Activated B cell treated with CpG ODN at 0.5 μM for 24 hours (primary cell): ENCODE measurements at regions of chr15 and their contacts with region 1.

Region 1: DNA sequence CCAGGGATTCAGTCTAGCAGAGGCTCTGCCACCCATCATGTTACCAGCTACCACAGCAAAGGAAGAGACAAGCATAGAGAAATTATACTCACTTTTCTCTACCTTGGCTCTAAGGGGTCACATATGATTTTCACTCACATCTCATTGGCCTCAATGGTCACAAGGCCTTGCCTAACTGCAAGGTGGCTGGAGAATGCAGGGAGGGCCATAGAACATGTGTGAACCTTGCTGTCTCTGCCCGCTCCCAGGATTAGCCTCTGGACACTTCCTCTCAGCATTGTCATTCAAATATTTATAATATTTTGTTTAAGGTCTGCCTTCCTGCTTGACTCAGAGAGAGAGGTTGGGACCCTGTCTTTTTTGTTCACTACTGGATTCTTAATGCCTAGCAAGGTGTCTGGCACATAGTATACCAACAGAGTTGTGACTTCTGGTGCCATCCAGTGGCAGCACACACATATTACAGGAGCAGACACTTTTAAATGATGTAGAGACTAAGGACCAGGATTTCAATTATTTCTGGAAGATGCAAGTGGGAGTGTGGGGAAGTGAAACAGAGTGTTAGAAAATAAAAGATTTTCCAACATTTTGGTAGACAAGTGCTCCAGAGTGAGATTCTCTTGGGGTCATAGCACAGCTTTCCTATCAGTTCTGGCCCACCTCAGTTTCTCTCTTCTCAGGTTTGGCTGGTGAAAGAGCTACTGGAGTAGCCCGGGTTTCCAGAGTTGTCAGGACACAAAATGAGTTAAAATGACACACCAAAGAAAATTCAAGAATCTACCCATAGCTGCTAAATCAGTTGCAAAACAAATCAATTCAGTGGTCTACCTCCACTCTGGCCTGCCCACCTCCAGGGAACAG is 119.0 kb upstream of the RASGRP1 start:
- DNase-seq: peak; percentile 47
- ATAC-seq: peak; percentile 74
- H3K4me3 Mint-ChIP-seq: peak overlapping the region; percentile 32
- H3K27ac Mint-ChIP-seq: peak overlapping the region; percentile 86
- H3K4me1 Mint-ChIP-seq: peaks cover 33% of the 10 kb centered on the region
- H3K27me3 Mint-ChIP-seq: no peaks in the 10 kb centered on the region
- CTCF ChIP-seq: peak; percentile 56

Region 2: GRCh38 chr15:38440353-38441129 is 243.1 kb before region 1 on chr15:
- CTCF ChIA-PET with region 1: interaction called, 106 read pairs
- POLR2A ChIA-PET with region 1: interaction called, 6 read pairs
- intact Hi-C with region 1: loop called (anchors 1 kb)
- DNase-seq: no peak
- ATAC-seq: peak; percentile 96
- H3K4me3 Mint-ChIP-seq: no peak overlapping the region
- H3K27ac Mint-ChIP-seq: no peak overlapping the region
- H3K4me1 Mint-ChIP-seq: peaks cover 5% of the 10 kb centered on the region
- H3K27me3 Mint-ChIP-seq: peaks cover 34% of the 10 kb centered on the region
- CTCF ChIP-seq: peak; percentile 64

Region 3: DNA sequence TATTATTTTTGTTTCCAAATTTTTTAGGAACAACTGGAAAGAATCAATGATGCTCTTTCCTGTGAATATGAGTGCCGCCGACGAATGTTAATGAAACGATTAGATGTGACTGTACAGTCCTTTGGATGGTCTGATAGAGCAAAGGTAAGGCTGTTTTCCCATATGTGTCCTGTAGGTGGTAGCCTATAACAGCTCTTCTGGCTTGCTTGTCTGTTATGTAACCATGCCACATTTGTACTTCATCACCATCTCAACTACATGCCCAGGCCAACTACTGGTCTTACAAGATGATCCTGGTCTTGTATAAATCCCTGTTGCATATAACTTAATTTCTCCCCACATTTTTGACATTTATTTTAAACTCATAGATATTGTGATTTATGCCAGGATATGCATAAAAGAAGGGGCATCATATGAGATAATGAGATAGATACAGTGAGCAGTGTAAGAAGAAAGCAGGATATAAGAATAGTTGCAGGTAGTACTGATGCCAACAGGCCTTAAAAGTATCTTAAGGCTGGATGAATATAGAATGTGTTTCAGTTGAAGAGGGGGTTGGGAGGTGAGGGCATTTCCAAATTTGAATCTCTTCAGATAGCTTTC is 209.4 kb before region 1 on chr15:
- CTCF ChIA-PET with region 1: interaction called, 84 read pairs
- POLR2A ChIA-PET with region 1: interaction called, 3 read pairs
- intact Hi-C with region 1: loop called (anchors 1 kb)
- DNase-seq: no peak
- ATAC-seq: peak; percentile 100
- H3K4me3 Mint-ChIP-seq: no peak overlapping the region
- H3K27ac Mint-ChIP-seq: no peak overlapping the region
- H3K4me1 Mint-ChIP-seq: no peaks in the 10 kb centered on the region
- H3K27me3 Mint-ChIP-seq: no peaks in the 10 kb centered on the region
- CTCF ChIP-seq: no peak

Region 4: GRCh38 chr15:38610748-38611147 is 72.9 kb before region 1 on chr15:
- CTCF ChIA-PET with region 1: interaction called, 7 read pairs
- POLR2A ChIA-PET with region 1: interaction called, 10 read pairs
- intact Hi-C with region 1: loop called (anchors 1 kb)
- DNase-seq: peak; percentile 20
- ATAC-seq: peak; percentile 98
- H3K4me3 Mint-ChIP-seq: peak overlapping the region; percentile 11
- H3K27ac Mint-ChIP-seq: peak overlapping the region; percentile 13
- H3K4me1 Mint-ChIP-seq: peaks cover 35% of the 10 kb centered on the region
- H3K27me3 Mint-ChIP-seq: no peaks in the 10 kb centered on the region
- CTCF ChIP-seq: no peak

Region 5: DNA sequence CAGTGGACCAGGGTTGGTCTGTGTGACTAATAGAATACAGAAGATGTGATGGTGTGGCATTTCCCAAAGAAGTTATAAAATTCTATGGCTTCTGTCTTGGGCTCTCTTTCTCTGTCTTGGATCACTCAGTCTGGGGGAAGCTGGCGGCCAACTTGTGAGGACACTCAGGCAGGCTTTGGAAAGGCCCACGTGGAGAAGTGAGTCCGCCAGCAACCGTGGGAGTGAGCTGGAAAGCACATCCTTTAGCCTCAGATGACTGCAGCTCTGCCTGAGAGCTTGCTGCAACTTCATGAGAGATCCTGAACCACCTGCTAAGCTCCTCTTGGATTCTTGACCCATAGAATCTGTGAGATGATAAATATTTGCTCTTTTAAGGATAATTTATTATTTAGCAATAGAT is 47.0 kb before region 1 on chr15:
- CTCF ChIA-PET with region 1: no interaction called
- POLR2A ChIA-PET with region 1: no interaction called
- intact Hi-C with region 1: no loop called
- DNase-seq: no peak
- ATAC-seq: no peak
- H3K4me3 Mint-ChIP-seq: no peak overlapping the region
- H3K27ac Mint-ChIP-seq: no peak overlapping the region
- H3K4me1 Mint-ChIP-seq: peaks cover 14% of the 10 kb centered on the region
- H3K27me3 Mint-ChIP-seq: no peaks in the 10 kb centered on the region
- CTCF ChIP-seq: no peak

Region 6: GRCh38 chr15:38660738-38661137 is 22.9 kb before region 1 on chr15:
- CTCF ChIA-PET with region 1: interaction called, 5 read pairs
- POLR2A ChIA-PET with region 1: interaction called, 10 read pairs
- intact Hi-C with region 1: no loop called
- DNase-seq: no peak
- ATAC-seq: no peak
- H3K4me3 Mint-ChIP-seq: no peak overlapping the region
- H3K27ac Mint-ChIP-seq: no peak overlapping the region
- H3K4me1 Mint-ChIP-seq: peaks cover 22% of the 10 kb centered on the region
- H3K27me3 Mint-ChIP-seq: no peaks in the 10 kb centered on the region
- CTCF ChIP-seq: no peak

Region 7: DNA sequence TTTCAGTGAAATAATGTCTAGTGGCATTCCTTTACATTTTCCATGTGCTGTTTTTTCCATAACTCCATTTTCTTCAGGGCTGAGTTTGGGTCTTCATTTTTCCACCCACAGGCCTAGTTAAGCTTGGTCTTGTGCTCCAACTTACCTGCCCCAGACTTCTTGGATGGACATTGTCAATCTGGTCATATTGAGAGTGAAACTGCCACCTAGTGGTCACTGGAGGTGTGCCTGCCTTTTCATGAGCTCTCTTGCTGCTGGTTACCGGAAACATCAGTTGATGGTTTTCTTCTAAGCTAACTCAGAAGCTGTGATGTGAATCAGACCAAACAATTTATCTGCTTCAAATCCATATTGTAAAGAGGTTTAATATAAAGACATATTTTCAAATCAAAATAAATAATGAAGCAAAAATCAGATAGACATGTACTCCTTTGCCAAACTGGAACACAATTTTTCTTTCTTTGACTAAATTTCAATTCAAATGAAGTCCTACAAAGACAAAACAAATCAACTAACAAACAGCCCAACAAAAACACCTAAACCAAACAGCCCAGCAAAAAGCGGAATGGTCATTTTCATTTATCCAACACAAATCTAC is 16.1 kb after region 1 on chr15:
- CTCF ChIA-PET with region 1: interaction called, 70 read pairs
- POLR2A ChIA-PET with region 1: no interaction called
- intact Hi-C with region 1: loop called (anchors 1 kb)
- DNase-seq: no peak
- ATAC-seq: peak; percentile 88
- H3K4me3 Mint-ChIP-seq: no peak overlapping the region
- H3K27ac Mint-ChIP-seq: no peak overlapping the region
- H3K4me1 Mint-ChIP-seq: no peaks in the 10 kb centered on the region
- H3K27me3 Mint-ChIP-seq: no peaks in the 10 kb centered on the region
- CTCF ChIP-seq: no peak

Region 8: GRCh38 chr15:38724827-38725226 is 41.2 kb after region 1 on chr15:
- CTCF ChIA-PET with region 1: no interaction called
- POLR2A ChIA-PET with region 1: no interaction called
- intact Hi-C with region 1: no loop called
- DNase-seq: no peak
- ATAC-seq: no peak
- H3K4me3 Mint-ChIP-seq: no peak overlapping the region
- H3K27ac Mint-ChIP-seq: no peak overlapping the region
- H3K4me1 Mint-ChIP-seq: no peaks in the 10 kb centered on the region
- H3K27me3 Mint-ChIP-seq: peaks cover 6% of the 10 kb centered on the region
- CTCF ChIP-seq: no peak

Region 9: GRCh38 chr15:38795471-38796245 is 112.0 kb after region 1 on chr15:
- CTCF ChIA-PET with region 1: no interaction called
- POLR2A ChIA-PET with region 1: no interaction called
- intact Hi-C with region 1: no loop called
- DNase-seq: no peak
- ATAC-seq: no peak
- H3K4me3 Mint-ChIP-seq: no peak overlapping the region
- H3K27ac Mint-ChIP-seq: no peak overlapping the region
- H3K4me1 Mint-ChIP-seq: no peaks in the 10 kb centered on the region
- H3K27me3 Mint-ChIP-seq: peaks cover 11% of the 10 kb centered on the region
- CTCF ChIP-seq: no peak

Region 10: DNA sequence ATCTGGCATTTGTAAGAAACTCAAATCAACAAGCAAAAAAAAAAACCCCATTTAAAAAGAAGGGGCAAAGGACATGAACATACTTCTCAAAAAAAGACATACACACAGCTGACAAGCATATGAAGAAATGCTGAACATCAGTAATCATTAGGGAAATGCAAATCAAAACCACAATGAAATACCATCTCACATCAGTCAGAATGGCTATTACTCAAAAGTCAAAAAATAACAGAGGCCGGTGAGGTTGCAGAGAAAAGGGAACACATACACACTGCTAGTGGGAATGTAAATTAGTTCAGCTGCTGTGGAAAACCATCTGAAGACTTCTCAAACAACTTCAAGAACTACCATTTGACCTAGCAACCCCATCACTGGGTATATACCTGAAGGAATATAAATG is 697.9 kb after region 1 on chr15:
- CTCF ChIA-PET with region 1: no interaction called
- POLR2A ChIA-PET with region 1: no interaction called
- intact Hi-C with region 1: no loop called
- DNase-seq: no peak
- ATAC-seq: no peak
- H3K4me3 Mint-ChIP-seq: no peak overlapping the region
- H3K27ac Mint-ChIP-seq: no peak overlapping the region
- H3K4me1 Mint-ChIP-seq: no peaks in the 10 kb centered on the region
- H3K27me3 Mint-ChIP-seq: no peaks in the 10 kb centered on the region
- CTCF ChIP-seq: no peak